GM23248 (cell line): ENCODE measurements at regions of chr17 and their contacts with region 1.

Region 1: DNA sequence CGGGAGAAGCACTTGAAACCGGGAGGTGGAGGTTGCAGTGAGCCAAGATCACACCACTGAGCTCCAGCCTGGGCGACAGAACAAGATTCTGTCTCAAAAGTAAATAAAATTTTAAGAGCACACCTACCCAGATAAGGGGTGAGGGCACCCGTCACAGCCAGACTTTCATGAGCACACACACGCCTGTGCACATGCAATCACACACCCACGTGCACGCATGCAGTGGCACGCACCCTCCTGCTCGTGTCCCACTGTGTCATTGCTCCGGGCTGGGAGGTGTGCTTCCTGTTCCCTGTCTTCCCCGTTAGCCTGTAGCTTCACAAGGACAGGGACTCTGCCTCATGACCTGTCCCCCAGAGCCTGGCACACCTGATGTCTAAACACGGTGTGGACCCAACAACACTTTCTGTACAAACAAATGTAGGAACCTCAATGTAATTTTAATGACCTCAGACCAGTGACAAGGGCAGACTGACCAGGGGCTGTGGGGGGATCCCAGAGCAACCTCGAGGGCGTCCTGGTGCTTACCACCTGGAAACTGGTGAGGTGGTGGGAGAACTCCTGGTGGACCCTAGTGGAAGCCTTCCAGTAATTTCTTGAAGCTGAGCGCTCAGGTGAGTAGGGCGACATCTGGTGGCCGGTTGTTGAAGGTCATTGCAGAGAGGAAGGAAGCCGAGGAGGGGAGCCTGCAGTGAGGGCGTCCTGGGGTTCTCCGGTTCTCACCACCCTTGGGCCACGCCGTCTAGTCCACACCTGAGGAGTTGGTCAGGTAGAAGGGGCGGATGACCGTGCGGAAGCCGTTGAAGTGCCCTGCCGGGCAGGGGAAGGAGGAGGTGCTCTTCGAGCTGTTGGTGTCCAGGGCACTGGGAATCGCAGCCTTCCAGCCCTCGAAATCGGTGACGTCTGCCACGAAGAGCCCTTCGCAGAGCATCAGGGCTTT is 8.6 kb downstream of the LGALS3BP start:
- DNase-seq: peak; percentile 75
- H3K4me3 ChIP-seq: no peak overlapping the region; the same call in 1 of the 2 replicates
- H3K27ac ChIP-seq: no peak overlapping the region
- H3K4me1 ChIP-seq: peaks cover 9% of the 10 kb centered on the region; the same call in 1 of the 2 replicates
- H3K27me3 ChIP-seq: no peaks in the 10 kb centered on the region

Region 2: GRCh38 chr17:78865682-78866390 is 105.3 kb before region 1 on chr17:
- in situ Hi-C with region 1: loop called (anchors 10 kb)
- DNase-seq: peak; percentile 81
- H3K4me3 ChIP-seq: no peak overlapping the region
- H3K27ac ChIP-seq: peak overlapping the region; percentile 18; the same call in 1 of the 2 replicates
- H3K4me1 ChIP-seq: peaks cover 41% of the 10 kb centered on the region
- H3K27me3 ChIP-seq: no peaks in the 10 kb centered on the region

Region 3: GRCh38 chr17:79009397-79010308 is 38.5 kb after region 1 on chr17 and contains the start of gene CANT1:
- in situ Hi-C with region 1: no loop called
- DNase-seq: peak; percentile 93
- H3K4me3 ChIP-seq: peak within 1 kb of the TSS; percentile 94
- H3K27ac ChIP-seq: peak within 1 kb of the TSS; percentile 54
- H3K4me1 ChIP-seq: peaks cover 30% of the 10 kb centered on the region
- H3K27me3 ChIP-seq: no peaks in the 10 kb centered on the region
- total RNA-seq, gene CANT1: 52.0 and 52.4 TPM in 2 replicates

Region 4: GRCh38 chr17:79045842-79046196 is 74.7 kb after region 1 on chr17:
- in situ Hi-C with region 1: no loop called
- DNase-seq: peak; percentile 82
- H3K4me3 ChIP-seq: no peak overlapping the region
- H3K27ac ChIP-seq: no peak overlapping the region
- H3K4me1 ChIP-seq: no peaks in the 10 kb centered on the region
- H3K27me3 ChIP-seq: no peaks in the 10 kb centered on the region

Region 5: GRCh38 chr17:79147746-79148506 is 176.8 kb after region 1 on chr17:
- in situ Hi-C with region 1: no loop called
- DNase-seq: peak; percentile 10
- H3K4me3 ChIP-seq: no peak overlapping the region
- H3K27ac ChIP-seq: no peak overlapping the region
- H3K4me1 ChIP-seq: no peaks in the 10 kb centered on the region
- H3K27me3 ChIP-seq: no peaks in the 10 kb centered on the region